ENCODE measurements at regions of chr2 and their contacts with region 1.

Region 1: GRCh38 chr2:16104949-16105668 is 164.8 kb downstream of the MYCN start:
- DNase-seq: no peak
- H3K4me3 ChIP-seq: no peak overlapping the region
- H3K4me3 Mint-ChIP-seq: no peak overlapping the region
- H3K27ac Mint-ChIP-seq: peak overlapping the region; percentile 48
- H3K4me1 ChIP-seq: peaks cover 67% of the 10 kb centered on the region
- H3K4me1 Mint-ChIP-seq: peaks cover 52% of the 10 kb centered on the region
- H3K27me3 ChIP-seq: no peaks in the 10 kb centered on the region
- H3K27me3 Mint-ChIP-seq: no peaks in the 10 kb centered on the region
- CTCF ChIP-seq: no peak

Region 2: DNA sequence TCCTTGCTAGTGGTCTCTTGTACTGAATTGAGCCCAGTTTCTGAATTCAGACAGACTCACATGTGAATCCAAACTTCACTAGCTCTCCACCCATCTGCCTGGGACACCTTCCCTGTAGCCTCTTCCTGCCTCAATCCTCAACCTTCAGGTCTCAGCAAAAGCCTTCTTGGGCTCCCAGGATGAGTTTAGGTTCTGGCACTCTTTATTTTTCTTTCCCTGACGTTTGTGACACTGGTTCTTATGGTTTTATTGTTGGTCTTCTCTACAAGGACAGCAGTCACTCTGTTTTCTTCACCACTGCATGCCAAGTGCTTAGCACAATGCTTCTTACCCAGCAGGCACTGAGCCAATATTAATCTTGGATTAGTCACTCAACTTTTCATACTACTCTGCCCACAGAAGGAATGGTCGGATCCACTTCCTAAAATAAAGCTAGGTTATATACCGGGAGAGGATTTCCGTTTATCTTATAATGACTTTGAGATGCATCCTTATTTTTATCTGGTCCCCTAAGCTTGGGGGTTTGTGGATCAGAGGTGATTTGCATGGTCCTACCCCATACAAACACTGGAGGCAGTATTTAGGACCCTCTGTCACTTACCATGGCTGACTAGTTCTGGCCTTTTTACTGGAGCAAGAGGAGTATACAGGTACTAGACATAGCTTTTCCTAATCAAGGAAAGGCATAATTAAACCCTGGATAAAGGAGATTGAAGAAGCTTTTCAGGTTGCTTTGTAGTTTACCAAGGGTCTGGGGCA is 21.6 kb after region 1 on chr2:
- CTCF ChIA-PET with region 1: no interaction called
- POLR2A ChIA-PET with region 1: no interaction called
- intact Hi-C with region 1: no loop called
- DNase-seq: no peak
- H3K4me3 ChIP-seq: no peak overlapping the region
- H3K4me3 Mint-ChIP-seq: no peak overlapping the region
- H3K27ac Mint-ChIP-seq: no peak overlapping the region
- H3K4me1 ChIP-seq: peaks cover 16% of the 10 kb centered on the region
- H3K4me1 Mint-ChIP-seq: no peaks in the 10 kb centered on the region
- H3K27me3 ChIP-seq: no peaks in the 10 kb centered on the region
- H3K27me3 Mint-ChIP-seq: no peaks in the 10 kb centered on the region
- CTCF ChIP-seq: no peak

Region 3: DNA sequence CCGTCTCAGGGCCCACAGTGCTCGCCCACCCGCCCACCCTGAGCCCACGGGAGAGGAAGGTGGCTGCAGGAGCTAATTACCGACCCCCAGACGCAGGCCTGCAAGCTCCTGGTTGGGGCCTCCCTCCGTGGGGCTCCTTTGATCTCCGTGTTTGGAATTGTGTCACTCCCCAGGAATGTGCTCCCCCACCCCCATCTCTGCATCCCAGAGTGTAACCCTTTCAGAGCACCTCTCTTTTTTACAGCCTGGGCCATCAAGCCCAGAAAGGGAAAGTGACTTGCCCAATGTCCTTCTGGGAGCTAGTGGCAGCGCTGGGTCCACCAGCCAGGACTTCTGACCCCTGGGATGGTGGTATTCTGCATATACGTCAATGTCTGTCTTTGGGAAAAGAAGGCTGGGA is 225.5 kb after region 1 on chr2:
- CTCF ChIA-PET with region 1: no interaction called
- POLR2A ChIA-PET with region 1: no interaction called
- intact Hi-C with region 1: loop called (anchors 5 kb)
- DNase-seq: peak; percentile 93 to 96
- H3K4me3 ChIP-seq: no peak overlapping the region
- H3K4me3 Mint-ChIP-seq: peak overlapping the region; percentile 58
- H3K27ac Mint-ChIP-seq: peak overlapping the region; percentile 98
- H3K4me1 ChIP-seq: peaks cover 62% of the 10 kb centered on the region
- H3K4me1 Mint-ChIP-seq: peaks cover 76% of the 10 kb centered on the region
- H3K27me3 ChIP-seq: no peaks in the 10 kb centered on the region
- H3K27me3 Mint-ChIP-seq: no peaks in the 10 kb centered on the region
- CTCF ChIP-seq: no peak